Psoas muscle (tissue), 8 donors: ENCODE measurements at regions of chr22 and their contacts with region 1.

Region 1: GRCh38 chr22:21074188-21074724 is 28.5 kb downstream of the LRRC74B start:
- DNase-seq: peak in 1 of 2 donors; percentile 34
- ATAC-seq: peak in 1 of 4 donors; percentile 47
- H3K4me3 ChIP-seq: no peak overlapping the region
- H3K27ac ChIP-seq: no peak overlapping the region
- H3K4me1 ChIP-seq: no peaks in the 10 kb centered on the region
- H3K27me3 ChIP-seq: peaks cover 0 to 2% (median 0%) of the 10 kb centered on the region in 3 donors
- CTCF ChIP-seq: no peak

Region 2: DNA sequence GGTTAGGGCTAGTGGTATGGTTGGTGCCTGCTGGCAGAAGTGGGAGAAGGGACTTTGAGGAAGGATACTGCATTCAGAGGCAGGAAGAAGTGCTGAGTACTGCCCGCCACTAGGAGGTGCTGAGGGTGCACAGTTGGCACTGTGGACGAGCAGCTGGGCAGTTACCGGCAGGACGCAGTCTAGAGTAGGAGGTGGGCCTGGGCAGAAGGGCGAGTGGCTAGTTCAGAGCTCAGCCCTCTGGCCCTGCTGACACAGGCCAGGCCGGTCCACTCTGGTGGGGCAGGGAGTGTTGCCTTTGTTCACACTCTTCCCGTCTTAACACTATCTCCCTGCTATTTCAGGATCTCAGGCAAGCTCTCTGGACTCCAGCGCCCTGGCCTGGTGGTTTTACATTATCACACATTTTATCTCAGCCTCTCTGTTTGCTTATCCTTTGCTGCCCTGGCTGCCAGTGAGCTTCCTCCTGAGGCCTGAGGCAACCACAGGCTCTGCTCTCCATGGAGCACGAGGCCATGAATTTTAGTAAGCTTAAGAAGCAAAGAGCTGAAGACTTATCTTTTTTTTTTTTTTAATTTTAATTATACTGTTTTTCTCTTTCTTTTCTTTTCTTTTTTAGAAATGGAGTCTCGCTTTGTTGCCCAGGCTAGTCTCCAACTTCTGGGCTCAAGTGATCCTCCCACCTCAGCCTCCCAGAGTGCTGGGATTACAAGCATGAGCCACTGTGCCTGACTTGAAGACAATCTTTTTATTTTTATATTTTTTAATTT is 188.5 kb before region 1 on chr22:
- intact Hi-C with region 1: loop called in 1 of 2 experiments (anchors 10 kb)
- DNase-seq: peak; percentile 82 to 88
- ATAC-seq: peak; percentile 98 to 99 (median 98)
- H3K4me3 ChIP-seq: no peak overlapping the region
- H3K27ac ChIP-seq: peak overlapping the region; percentile 54
- H3K4me1 ChIP-seq: no peaks in the 10 kb centered on the region
- H3K27me3 ChIP-seq: no peaks in the 10 kb centered on the region
- CTCF ChIP-seq: peak; percentile 84

Region 3: DNA sequence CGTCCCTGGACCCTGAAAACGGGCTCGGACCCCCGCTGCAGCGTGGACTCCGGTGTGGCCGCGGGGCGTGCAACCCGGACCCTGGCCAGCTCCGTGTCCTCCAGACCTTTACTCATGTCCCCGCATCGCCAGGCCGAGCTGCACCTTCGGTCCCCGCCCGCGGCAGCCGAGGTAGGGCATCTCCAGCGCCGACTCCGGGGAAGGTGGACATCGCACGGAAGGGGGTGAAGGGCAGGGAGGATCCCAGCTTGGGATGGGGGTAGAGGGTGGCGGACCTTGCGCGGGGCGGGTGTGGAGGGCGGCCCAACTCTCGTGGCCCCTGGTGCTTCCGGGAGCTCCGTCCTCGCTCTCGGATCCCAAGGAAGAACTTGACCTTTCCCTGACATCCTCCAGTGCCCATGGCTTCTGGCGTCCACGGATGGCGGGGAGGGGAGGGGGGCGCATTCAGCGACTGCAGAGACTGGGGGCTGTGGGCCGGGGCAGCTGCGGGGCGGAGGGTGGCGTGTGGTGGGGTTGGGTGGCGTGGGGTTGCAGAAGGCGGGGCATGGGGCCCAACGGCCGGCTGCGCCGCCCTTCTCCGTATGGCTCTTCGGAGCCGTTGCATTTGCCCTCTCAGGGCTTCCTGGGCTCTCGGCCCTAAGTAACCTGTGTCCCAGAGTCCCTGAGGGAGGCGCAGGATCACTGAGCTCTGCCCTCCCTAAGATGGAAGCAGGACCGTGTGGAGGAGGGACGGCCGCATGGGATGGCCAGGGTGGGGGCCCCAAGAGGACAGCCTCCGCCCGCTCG is 116.7 kb before region 1 on chr22:
- intact Hi-C with region 1: no loop called
- DNase-seq: peak; percentile 27 to 66
- ATAC-seq: peak; percentile 29 to 49 (median 35)
- H3K4me3 ChIP-seq: peak overlapping the region; percentile 68
- H3K27ac ChIP-seq: no peak overlapping the region
- H3K4me1 ChIP-seq: peaks cover 6% of the 10 kb centered on the region
- H3K27me3 ChIP-seq: no peaks in the 10 kb centered on the region
- CTCF ChIP-seq: no peak

Region 4: DNA sequence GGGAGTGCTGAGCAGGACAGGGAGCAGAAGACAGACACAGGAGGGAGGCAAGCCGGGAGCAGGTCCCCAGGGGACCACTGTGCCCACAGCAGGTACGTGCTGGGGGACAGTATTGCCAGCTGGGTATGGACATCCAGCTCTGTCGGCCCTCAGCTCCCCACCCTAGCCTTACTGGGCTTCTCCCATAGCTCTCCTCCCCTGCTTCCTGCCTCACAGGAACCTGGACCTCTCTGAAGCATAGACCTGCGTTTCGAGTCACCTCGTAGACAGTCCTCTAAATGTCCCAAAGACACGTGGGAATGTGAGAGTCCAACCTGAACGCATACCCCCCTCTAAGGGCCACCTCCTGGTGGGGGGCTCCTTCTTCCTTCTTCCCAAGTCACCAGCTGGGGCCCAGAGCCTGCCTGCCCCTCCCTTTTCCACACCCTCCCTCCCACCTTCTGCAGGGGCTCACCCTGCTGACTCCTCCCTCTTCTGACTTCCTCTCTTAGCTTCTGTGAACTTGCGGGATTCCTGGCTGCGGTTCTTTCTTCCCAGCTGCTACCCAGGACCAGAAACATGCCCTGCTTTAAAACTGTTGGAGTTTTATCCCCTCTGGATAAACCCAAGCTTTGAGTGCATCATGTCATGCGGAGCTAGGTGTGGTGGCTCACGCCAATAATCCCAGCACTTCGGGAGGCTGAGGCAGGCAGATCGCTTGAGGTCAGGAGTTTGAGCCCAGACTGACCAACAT is 18.5 kb before region 1 on chr22:
- intact Hi-C with region 1: no loop called
- DNase-seq: no peak
- ATAC-seq: no peak
- H3K4me3 ChIP-seq: no peak overlapping the region
- H3K27ac ChIP-seq: no peak overlapping the region
- H3K4me1 ChIP-seq: no peaks in the 10 kb centered on the region
- H3K27me3 ChIP-seq: no peaks in the 10 kb centered on the region
- CTCF ChIP-seq: no peak